SK-N-SH (cell line): ENCODE measurements at regions of chr22 and their contacts with region 1.

Region 1: DNA sequence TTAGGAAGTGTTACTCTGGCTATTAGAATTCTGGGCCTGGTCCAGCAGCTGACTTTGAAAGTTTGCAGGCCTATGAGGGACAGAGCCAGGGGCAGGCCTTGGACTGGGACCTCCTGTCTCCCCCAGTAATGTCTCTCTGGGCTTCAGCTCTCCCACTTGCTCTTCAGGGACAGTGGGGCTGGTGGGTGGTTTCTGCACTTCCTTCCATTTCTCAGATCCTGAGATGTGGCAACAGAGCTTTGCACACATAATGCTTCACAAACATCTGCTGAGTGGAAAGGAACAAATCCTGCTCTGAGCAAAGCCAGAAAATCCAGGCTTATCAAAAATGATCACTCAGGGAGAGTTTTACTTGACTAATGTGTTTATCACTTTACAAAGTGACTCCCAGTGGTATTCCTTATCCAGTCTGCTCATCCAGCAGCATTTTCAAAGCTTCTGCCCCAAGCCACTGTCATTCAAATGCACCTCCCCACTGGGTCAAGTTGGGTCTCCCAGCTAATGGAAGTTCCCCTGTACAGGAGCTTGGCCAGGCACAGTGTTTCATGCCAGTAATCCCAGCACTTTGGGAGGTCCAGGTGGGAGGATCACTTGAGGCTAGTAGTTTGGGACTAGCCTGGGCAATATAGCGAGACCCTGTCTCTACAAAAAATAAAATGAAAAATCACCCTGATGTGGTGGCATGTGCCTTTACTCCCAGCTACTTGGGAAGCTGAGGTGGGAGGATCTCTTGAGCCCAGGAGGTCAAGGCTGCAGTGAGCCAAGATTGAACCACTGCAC is 13.5 kb upstream of the OSBP2 start:
- DNase-seq: peak; percentile 34
- H3K4me3 ChIP-seq: no peak overlapping the region
- H3K27ac ChIP-seq: peak overlapping the region in 1 of 2 experiments; percentile 67; a peak in 2 of 4 replicates
- H3K4me1 ChIP-seq: peaks cover 0 to 28% of the 10 kb centered on the region in 2 experiments; a peak in 1 of 4 replicates
- H3K27me3 ChIP-seq: no peaks in the 10 kb centered on the region
- CTCF ChIP-seq: no peak
- EP300 ChIP-seq: 0 out of 4 replicates have a peak, but pooled peaks of 1 of the 2 experiments have one; percentile 6
- RAD21 ChIP-seq: no peak

Region 2: DNA sequence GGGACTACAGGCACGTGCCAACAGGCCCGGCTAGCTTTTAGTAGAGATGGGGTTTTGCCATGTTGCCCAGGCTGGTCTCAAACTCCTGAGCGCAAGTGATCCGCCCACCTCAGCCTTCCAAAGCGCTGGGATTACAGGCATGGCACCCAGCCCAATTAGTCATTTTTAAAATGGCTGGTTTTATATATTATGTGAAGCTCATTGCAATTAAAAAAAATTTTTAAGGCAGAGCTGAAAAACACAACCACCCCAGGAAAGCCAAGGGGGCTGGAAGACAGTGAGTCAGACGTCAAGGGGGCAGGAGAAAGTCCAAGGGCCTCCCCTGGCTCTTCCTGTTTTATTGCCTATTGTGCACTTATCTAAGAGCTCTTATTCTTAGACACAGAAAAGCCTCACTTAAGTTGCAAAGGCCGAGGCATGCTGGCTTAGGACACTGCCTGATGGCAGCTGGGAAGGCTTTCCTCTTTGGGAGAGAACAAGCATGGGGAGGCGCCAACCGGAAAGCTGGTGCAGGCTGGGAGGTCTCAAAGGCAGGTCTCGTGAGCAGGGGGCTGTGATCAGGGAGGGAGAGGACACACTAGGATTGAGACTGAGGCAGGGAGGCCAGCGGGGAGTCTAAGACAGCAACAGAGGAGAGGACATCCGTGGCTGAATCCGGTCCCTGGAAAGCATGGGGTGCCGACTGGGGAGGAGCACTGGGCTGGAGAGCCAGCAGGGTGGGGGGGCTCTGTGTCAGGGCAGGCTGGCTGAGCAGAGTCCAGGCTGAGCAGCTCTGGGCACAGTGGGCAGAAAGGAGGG is 403.4 kb before region 1 on chr22:
- CTCF ChIA-PET with region 1: no interaction called
- POLR2A ChIA-PET with region 1: no interaction called
- DNase-seq: no peak
- H3K4me3 ChIP-seq: no peak overlapping the region
- H3K27ac ChIP-seq: peak overlapping the region in 1 of 2 experiments; percentile 70; a peak in 2 of 4 replicates
- H3K4me1 ChIP-seq: peaks cover 0 to 14% of the 10 kb centered on the region in 2 experiments; a peak in 2 of 4 replicates
- H3K27me3 ChIP-seq: no peaks in the 10 kb centered on the region
- CTCF ChIP-seq: no peak
- EP300 ChIP-seq: no peak
- RAD21 ChIP-seq: no peak

Region 3: DNA sequence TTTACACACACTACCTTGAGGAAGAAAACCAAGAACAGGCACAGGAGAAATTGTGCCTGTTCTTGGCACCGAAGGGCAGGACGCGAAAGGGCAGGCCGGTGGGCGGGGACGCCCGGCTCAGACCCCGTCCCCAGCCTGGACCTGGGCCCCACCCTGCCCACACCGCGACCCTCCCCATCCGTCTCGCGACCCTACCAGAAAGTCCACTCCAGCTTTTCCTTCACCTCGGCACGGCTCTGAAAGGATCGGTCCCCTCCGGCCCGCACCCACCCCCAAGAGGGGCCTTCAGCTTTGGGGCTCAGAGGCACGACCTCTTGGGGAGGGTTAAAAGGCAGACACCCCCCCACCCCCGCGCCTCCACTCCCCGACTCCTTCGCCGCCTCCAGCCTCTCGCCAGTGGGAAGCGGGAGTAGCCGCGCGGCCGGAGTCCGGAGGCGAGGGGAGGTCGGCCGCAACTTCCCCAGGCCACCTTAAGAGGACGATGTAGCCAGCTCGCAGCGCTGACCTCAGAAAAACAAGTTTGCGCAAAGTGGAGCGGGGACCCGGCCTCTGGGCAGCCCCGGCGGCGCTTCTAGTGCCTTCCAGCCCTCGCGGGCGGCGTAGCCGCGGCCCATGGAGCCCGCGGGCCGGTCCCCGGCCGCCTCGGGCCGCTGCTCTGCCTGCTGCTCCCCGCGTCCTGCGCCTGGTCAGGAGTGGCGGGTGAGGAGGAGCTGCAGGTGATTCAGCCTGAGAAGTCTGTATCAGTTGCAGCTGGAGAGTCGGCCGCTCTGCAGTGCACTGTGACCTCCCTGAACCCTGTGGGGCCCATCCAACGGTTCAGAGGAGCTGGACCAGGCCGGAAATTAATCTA is 139.0 kb before region 1 on chr22:
- CTCF ChIA-PET with region 1: no interaction called
- POLR2A ChIA-PET with region 1: no interaction called
- DNase-seq: no peak
- H3K4me3 ChIP-seq: no peak overlapping the region
- H3K27ac ChIP-seq: no peak overlapping the region
- H3K4me1 ChIP-seq: peaks cover 0 to 7% of the 10 kb centered on the region in 2 experiments; a peak in 1 of 4 replicates
- H3K27me3 ChIP-seq: no peaks in the 10 kb centered on the region
- CTCF ChIP-seq: no peak
- EP300 ChIP-seq: no peak
- RAD21 ChIP-seq: no peak

Region 4: GRCh38 chr22:30694171-30694639 is 13.0 kb after region 1 on chr22:
- CTCF ChIA-PET with region 1: interaction called, 10 read pairs
- POLR2A ChIA-PET with region 1: interaction called, 6 read pairs
- DNase-seq: peak; percentile 84
- H3K4me3 ChIP-seq: peak overlapping the region; percentile 64 to 76
- H3K27ac ChIP-seq: peak overlapping the region in 1 of 2 experiments; percentile 84; a peak in 2 of 4 replicates
- H3K4me1 ChIP-seq: peaks cover 0 to 19% of the 10 kb centered on the region in 2 experiments; a peak in 2 of 4 replicates
- H3K27me3 ChIP-seq: no peaks in the 10 kb centered on the region
- CTCF ChIP-seq: no peak
- EP300 ChIP-seq: no peak
- RAD21 ChIP-seq: no peak